Esophagus squamous epithelium (tissue), 5 donors: ENCODE measurements at regions of chr19 and their contacts with region 1.

Region 1: GRCh38 chr19:40529093-40529954 is 47.3 kb upstream of the SHKBP1 start:
- DNase-seq: no peak
- H3K4me3 ChIP-seq: peak overlapping the region; percentile 24 to 75 (median 48)
- H3K27ac ChIP-seq: peak overlapping the region in 2 of 4 donors; percentile 12 to 57
- H3K4me1 ChIP-seq: peaks cover 6 to 21% (median 15%) of the 10 kb centered on the region in 3 donors
- H3K27me3 ChIP-seq: peaks cover 0 to 34% (median 0%) of the 10 kb centered on the region in 4 donors
- CTCF ChIP-seq: peak; percentile 94 to 100 (median 94)
- POLR2A ChIP-seq: no peak

Region 2: GRCh38 chr19:40312533-40312932 is 216.8 kb before region 1 on chr19:
- intact Hi-C with region 1: loop called (anchors 10 kb)
- DNase-seq: no peak
- H3K4me3 ChIP-seq: no peak overlapping the region
- H3K27ac ChIP-seq: no peak overlapping the region
- H3K4me1 ChIP-seq: peaks cover 0 to 11% (median 0%) of the 10 kb centered on the region in 3 donors
- H3K27me3 ChIP-seq: no peaks in the 10 kb centered on the region
- CTCF ChIP-seq: no peak
- POLR2A ChIP-seq: no peak

Region 3: DNA sequence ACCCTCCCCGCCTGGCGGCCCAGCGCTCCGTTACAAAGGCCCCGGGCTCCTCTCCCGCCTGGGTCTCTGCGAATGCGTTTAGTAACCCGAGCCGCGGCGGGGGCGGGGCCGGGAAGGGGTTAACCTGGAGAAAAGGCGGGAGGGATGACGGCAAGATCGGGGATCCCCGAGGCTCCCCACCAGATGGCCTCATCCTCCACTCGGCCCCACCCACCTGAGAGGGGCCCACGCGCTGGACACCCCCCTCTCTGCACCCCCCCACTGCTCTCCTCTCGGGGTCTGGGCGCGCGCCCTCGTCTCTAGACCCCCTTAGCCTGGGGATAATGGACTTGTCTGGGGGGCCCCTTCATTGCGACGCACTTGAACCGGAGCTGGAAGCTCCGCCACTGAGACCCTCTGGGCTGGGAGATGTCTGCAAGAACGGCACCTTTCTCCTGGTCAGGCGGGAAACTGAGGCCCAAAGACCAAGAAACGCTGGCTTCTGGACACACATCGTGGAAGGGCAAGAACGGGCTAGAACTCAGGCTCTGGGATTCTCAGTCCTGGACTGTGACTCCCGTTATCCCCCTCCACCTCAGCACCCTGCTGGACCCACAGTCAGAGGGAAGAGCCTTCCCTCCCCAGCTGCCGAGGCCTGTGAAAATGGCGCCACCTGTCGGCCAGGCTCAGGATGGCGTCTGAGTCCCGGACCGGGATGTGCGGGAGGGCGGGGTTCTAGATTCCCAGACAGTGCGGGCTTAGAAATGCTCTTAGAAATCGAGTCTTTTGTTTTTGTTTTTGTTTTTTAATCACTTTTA is 69.0 kb after region 1 on chr19:
- intact Hi-C with region 1: loop called (anchors 5 kb)
- DNase-seq: no peak
- H3K4me3 ChIP-seq: peak overlapping the region in 1 of 4 donors; percentile 4
- H3K27ac ChIP-seq: peak overlapping the region in 1 of 4 donors; percentile 95
- H3K4me1 ChIP-seq: peaks cover 52 to 75% (median 53%) of the 10 kb centered on the region in 3 donors
- H3K27me3 ChIP-seq: peaks cover 0 to 65% (median 12%) of the 10 kb centered on the region in 4 donors
- CTCF ChIP-seq: peak; percentile 82 to 99 (median 98)
- POLR2A ChIP-seq: no peak

Region 4: GRCh38 chr19:40633207-40633606 is 103.9 kb after region 1 on chr19:
- intact Hi-C with region 1: loop called (anchors 10 kb)
- DNase-seq: no peak
- H3K4me3 ChIP-seq: no peak overlapping the region
- H3K27ac ChIP-seq: no peak overlapping the region
- H3K4me1 ChIP-seq: peaks cover 0 to 14% (median 0%) of the 10 kb centered on the region in 3 donors
- H3K27me3 ChIP-seq: no peaks in the 10 kb centered on the region
- CTCF ChIP-seq: no peak
- POLR2A ChIP-seq: no peak